A673 (cell line): ENCODE measurements at regions of chr20 and their contacts with region 1.

Region 1: DNA sequence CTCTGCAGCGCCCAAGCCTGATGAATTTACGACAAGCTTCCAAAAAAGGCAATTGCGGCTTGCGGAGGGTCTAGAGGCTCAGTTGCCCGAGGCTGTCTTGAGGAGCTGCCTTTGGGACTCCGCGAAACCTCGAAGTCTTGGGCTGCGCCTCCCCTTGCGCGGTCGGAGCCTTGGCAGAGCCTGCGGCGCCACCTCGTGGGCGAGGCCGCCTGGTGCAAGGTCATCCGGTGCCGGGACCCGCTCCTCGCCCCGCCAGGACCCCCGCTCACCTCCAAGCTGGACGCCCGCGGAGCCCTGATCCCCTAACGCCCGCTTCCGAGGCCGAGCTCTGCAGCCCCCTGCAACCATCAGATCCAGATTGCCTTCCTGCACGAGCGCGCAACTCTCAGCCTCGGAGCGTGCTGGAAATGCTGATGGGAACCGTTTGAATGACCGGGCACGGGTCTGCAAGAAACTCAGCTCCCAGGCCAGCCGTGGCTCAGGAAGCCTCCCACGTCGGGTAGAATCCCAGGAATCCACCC is 14.9 kb upstream of the FAM210B start:
- DNase-seq: peak; percentile 72
- H3K4me3 ChIP-seq: peak overlapping the region; percentile 16
- H3K27ac ChIP-seq: no peak overlapping the region
- H3K4me1 ChIP-seq: no peaks in the 10 kb centered on the region
- H3K27me3 ChIP-seq: peaks cover 35% of the 10 kb centered on the region
- CTCF ChIP-seq: peak; percentile 85

Region 2: GRCh38 chr20:54680872-54681619 is 1662.9 kb before region 1 on chr20:
- CTCF ChIA-PET with region 1: interaction called, 3 read pairs
- POLR2A ChIA-PET with region 1: no interaction called
- intact Hi-C with region 1: loop called (anchors 5 kb)
- DNase-seq: peak; percentile 70
- H3K4me3 ChIP-seq: no peak overlapping the region
- H3K27ac ChIP-seq: no peak overlapping the region
- H3K4me1 ChIP-seq: no peaks in the 10 kb centered on the region
- H3K27me3 ChIP-seq: peaks cover 48% of the 10 kb centered on the region
- CTCF ChIP-seq: peak; percentile 83

Region 3: GRCh38 chr20:56540420-56540819 is 196.5 kb after region 1 on chr20:
- CTCF ChIA-PET with region 1: no interaction called
- POLR2A ChIA-PET with region 1: no interaction called
- intact Hi-C with region 1: no loop called
- DNase-seq: no peak
- H3K4me3 ChIP-seq: no peak overlapping the region
- H3K27ac ChIP-seq: no peak overlapping the region
- H3K4me1 ChIP-seq: no peaks in the 10 kb centered on the region
- H3K27me3 ChIP-seq: no peaks in the 10 kb centered on the region
- CTCF ChIP-seq: no peak